Activated naive CD4-positive, alpha-beta T cell treated with anti-CD3 and anti-CD28 coated beads for 36 hours (primary cell): ENCODE measurements at regions of chr5 and their contacts with region 1.

Region 1: DNA sequence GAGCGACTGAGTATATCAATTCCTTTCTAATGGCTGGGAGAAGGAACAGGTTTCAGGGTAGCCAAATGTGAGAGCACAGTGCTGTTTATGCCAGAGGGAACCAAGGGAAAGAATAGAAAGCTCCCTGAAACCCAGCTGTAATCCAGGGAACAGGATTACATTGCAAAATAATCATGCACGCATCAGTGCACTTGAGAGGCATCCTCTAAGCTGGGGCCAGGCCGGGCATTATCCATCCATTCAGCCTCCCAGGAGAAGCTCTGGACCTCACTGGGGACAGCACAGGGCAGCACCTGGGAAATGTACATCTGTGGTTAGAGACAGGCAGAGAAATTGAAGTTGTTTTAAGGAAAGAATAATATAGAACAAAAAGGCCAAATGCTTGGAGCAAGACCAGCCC is 72.7 kb downstream of the MTRR start:
- DNase-seq: no peak
- H3K4me3 Mint-ChIP-seq: no peak overlapping the region
- H3K27ac Mint-ChIP-seq: no peak overlapping the region
- H3K4me1 Mint-ChIP-seq: no peaks in the 10 kb centered on the region
- H3K27me3 Mint-ChIP-seq: peaks cover 15% of the 10 kb centered on the region

Region 2: DNA sequence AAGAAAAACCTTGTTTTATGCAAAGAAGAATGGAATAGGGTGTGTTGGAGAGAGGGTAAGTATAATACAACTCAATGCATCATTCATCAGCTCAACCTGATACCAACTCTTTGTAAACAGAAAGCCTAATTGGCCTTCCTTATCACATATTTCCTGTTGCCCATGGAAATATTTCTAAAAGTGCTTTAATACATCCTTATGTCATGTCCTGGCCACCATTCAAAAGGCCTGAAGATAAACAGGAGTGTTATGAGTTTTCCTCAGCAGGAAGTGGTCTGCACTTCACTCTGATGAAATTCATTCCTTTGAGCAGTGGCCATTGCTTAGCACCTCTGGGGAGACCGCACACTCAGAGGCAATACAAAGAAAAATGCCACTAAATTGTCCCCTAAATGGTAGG is 1093.0 kb after region 1 on chr5:
- CTCF ChIA-PET with region 1: no interaction called
- intact Hi-C with region 1: loop called (anchors 5 kb)
- DNase-seq: no peak
- H3K4me3 Mint-ChIP-seq: no peak overlapping the region
- H3K27ac Mint-ChIP-seq: no peak overlapping the region
- H3K4me1 Mint-ChIP-seq: no peaks in the 10 kb centered on the region
- H3K27me3 Mint-ChIP-seq: no peaks in the 10 kb centered on the region